ENCODE measurements at regions of chr7 and their contacts with region 1.

Region 1: GRCh38 chr7:36366718-36367560 is 22.7 kb upstream of the ANLN start:
- DNase-seq: peak; percentile 84 to 92 (median 91)
- ATAC-seq: peak; percentile 98
- H3K4me3 ChIP-seq: peak overlapping the region; percentile 76
- H3K4me3 Mint-ChIP-seq: peak overlapping the region; percentile 80 to 97 (median 93)
- H3K27ac ChIP-seq: peak overlapping the region; percentile 70
- H3K27ac Mint-ChIP-seq: peak overlapping the region in 8 of 9 donors; percentile 51 to 94 (median 82)
- H3K4me1 ChIP-seq: peaks cover 0 to 5% of the 10 kb centered on the region in 2 donors
- H3K4me1 Mint-ChIP-seq: peaks cover 0 to 8% (median 5%) of the 10 kb centered on the region in 7 donors
- H3K27me3 ChIP-seq: no peaks in the 10 kb centered on the region
- H3K27me3 Mint-ChIP-seq: peaks cover 0 to 57% (median 0%) of the 10 kb centered on the region in 5 donors

Region 2: DNA sequence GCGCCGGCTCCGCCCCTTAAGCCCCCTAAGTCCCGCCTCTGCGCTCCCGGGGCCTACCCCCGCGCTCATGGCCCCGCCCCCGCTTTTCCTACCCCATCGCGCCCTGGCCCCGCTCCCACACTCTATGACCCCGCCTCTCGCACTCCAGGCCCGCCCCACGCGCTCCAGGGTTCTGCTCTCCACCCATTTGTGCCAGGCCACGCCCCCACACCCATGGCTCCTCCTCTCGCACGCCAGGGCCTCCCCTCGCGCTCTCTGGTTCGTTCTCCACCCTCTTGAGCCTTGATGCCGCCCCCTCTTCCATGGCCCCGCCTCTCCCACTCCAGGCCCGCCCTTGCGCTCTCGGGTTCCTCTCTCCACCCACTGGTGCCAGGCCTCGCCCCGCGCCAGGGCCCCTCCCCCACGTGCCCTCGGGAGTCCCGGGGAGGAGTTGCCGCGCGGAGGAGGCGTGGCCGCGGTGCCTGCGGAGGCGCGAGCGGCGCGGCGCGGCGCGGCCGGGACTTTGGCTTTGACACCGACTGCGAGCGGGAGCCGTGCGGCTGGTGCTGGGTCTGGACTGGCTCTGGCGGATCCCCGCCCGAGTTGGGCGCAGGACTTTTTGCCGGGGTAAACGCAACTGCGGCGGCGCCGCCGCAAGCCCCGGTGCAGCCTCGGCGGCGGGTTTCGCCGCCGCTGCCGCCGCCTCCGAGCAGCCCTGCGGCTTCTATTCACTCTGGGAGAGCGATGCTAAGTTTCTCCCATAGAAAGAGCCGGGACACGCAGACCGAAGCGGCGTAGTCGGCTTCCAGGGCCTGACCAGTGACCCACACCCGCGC is 214.0 kb before region 1 on chr7 and contains the start of gene EEPD1:
- CTCF ChIA-PET with region 1: no interaction called
- POLR2A ChIA-PET with region 1: no interaction called
- intact Hi-C with region 1: loop called (anchors 1 to 10 kb)
- DNase-seq: peak; percentile 99 to 100 (median 100)
- ATAC-seq: peak; percentile 96
- H3K4me3 ChIP-seq: peak within 1 kb of the TSS; percentile 72
- H3K4me3 Mint-ChIP-seq: peak within 1 kb of the TSS; percentile 70 to 93 (median 84)
- H3K27ac ChIP-seq: peak within 1 kb of the TSS; percentile 73
- H3K27ac Mint-ChIP-seq: peak within 1 kb of the TSS in 8 of 9 donors; percentile 10 to 87 (median 74)
- H3K4me1 ChIP-seq: peaks cover 7 to 16% of the 10 kb centered on the region in 2 donors
- H3K4me1 Mint-ChIP-seq: peaks cover 12 to 31% (median 24%) of the 10 kb centered on the region in 7 donors
- H3K27me3 ChIP-seq: no peaks in the 10 kb centered on the region
- H3K27me3 Mint-ChIP-seq: peaks cover 0 to 21% (median 0%) of the 10 kb centered on the region in 5 donors
- total RNA-seq, gene EEPD1: 2.2 to 13.2 (median 3.7) TPM

Region 3: DNA sequence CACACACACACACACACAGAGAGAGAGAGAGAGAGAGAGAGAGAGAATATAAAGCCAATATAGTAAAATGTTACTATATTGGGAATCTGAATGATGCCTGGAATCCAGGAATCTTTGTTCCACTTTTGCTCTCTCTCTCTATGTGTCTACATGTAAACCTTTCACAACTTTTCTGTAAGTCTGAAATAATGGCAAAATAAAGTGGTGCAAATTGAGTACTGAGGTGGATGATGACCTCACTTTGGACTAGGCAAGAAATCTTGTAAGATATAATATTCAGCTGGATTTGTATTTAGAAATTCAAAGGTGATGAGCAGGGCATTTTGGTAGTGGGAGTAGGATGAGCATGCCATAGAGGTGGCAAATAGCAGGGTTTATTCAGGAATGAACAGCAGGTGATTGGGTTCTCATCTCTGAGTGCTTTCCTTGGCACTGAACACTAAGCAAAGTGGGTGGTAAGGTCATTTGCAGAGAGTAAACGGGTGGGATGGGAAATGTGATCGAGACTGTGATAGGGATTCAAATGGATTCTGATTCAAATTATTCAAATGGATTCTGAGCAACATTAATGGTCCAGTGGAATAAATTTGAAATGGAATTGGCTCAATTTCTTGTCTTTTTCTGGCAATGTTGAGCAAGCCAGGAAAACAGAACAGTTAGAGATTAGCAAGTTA is 13.0 kb after region 1 on chr7:
- CTCF ChIA-PET with region 1: interaction called, 3 read pairs
- POLR2A ChIA-PET with region 1: interaction called, 6 read pairs
- intact Hi-C with region 1: loop called in 1 of 2 experiments (anchors 1 kb)
- DNase-seq: no peak
- ATAC-seq: no peak
- H3K4me3 ChIP-seq: no peak overlapping the region
- H3K4me3 Mint-ChIP-seq: peak overlapping the region in 1 of 10 donors; percentile 5
- H3K27ac ChIP-seq: no peak overlapping the region
- H3K27ac Mint-ChIP-seq: peak overlapping the region in 5 of 9 donors; percentile 9 to 60 (median 32)
- H3K4me1 ChIP-seq: peaks cover 5 to 7% of the 10 kb centered on the region in 2 donors
- H3K4me1 Mint-ChIP-seq: peaks cover 7 to 30% (median 25%) of the 10 kb centered on the region in 7 donors
- H3K27me3 ChIP-seq: no peaks in the 10 kb centered on the region
- H3K27me3 Mint-ChIP-seq: peaks cover 2 to 22% (median 6%) of the 10 kb centered on the region in 5 donors

Region 4: DNA sequence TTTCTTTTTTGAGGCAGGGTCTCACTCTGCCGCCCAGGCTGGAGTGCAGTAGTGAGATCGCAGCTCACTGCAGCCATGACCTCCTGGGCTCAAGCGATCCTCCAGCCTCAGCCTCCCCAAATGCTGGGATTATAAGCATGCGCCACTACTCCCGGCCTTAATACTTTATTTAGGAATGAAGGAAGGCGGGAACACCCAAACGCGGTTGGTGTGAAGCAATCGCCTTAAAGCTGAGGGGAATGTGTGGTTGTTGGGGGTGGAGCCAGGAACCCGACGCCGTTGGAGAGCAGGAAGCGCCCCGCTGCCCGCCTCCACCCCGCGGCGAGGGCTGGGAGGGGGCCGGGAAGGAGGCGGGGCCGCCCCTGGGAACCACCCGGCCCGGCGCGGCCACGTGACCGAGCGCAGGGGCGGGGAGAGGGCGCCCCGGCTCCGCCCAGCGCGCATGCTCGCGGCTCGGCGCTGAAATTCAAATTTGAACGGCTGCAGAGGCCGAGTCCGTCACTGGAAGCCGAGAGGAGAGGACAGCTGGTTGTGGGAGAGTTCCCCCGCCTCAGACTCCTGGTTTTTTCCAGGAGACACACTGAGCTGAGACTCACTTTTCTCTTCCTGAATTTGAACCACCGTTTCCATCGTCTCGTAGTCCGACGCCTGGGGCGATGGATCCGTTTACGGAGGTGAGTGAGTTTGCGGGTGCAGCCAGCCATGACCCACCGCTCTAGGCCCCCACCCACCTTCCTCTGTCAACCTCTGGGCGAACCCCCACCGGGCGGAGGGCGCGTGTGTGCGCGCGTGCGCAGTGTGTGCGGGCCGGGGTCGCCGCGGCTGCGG is 22.6 kb after region 1 on chr7 and contains the start of gene ANLN:
- CTCF ChIA-PET with region 1: interaction called, 11 read pairs
- POLR2A ChIA-PET with region 1: no interaction called
- intact Hi-C with region 1: loop called (anchors 1 kb)
- DNase-seq: peak; percentile 71 to 91 (median 82)
- ATAC-seq: peak; percentile 98
- H3K4me3 ChIP-seq: peak within 1 kb of the TSS; percentile 78
- H3K4me3 Mint-ChIP-seq: peak within 1 kb of the TSS; percentile 77 to 90 (median 85)
- H3K27ac ChIP-seq: peak within 1 kb of the TSS; percentile 67
- H3K27ac Mint-ChIP-seq: peak within 1 kb of the TSS; percentile 72 to 90 (median 81)
- H3K4me1 ChIP-seq: peaks cover 8 to 19% of the 10 kb centered on the region in 2 donors
- H3K4me1 Mint-ChIP-seq: peaks cover 12 to 39% (median 26%) of the 10 kb centered on the region in 7 donors
- H3K27me3 ChIP-seq: no peaks in the 10 kb centered on the region
- H3K27me3 Mint-ChIP-seq: peaks cover 0 to 12% (median 0%) of the 10 kb centered on the region in 5 donors
- total RNA-seq, gene ANLN: 0.35 to 48.6 (median 0.82) TPM

Region 5: GRCh38 chr7:36440880-36441279 is 73.9 kb after region 1 on chr7:
- CTCF ChIA-PET with region 1: no interaction called
- POLR2A ChIA-PET with region 1: interaction called, 3 read pairs
- intact Hi-C with region 1: loop called in 1 of 2 experiments (anchors 5 kb)
- DNase-seq: peak in 4 of 9 donors; percentile 3 to 19 (median 10)
- ATAC-seq: no peak
- H3K4me3 ChIP-seq: no peak overlapping the region
- H3K4me3 Mint-ChIP-seq: no peak overlapping the region
- H3K27ac ChIP-seq: no peak overlapping the region
- H3K27ac Mint-ChIP-seq: no peak overlapping the region
- H3K4me1 ChIP-seq: no peaks in the 10 kb centered on the region
- H3K4me1 Mint-ChIP-seq: no peaks in the 10 kb centered on the region
- H3K27me3 ChIP-seq: no peaks in the 10 kb centered on the region
- H3K27me3 Mint-ChIP-seq: no peaks in the 10 kb centered on the region

Region 6: DNA sequence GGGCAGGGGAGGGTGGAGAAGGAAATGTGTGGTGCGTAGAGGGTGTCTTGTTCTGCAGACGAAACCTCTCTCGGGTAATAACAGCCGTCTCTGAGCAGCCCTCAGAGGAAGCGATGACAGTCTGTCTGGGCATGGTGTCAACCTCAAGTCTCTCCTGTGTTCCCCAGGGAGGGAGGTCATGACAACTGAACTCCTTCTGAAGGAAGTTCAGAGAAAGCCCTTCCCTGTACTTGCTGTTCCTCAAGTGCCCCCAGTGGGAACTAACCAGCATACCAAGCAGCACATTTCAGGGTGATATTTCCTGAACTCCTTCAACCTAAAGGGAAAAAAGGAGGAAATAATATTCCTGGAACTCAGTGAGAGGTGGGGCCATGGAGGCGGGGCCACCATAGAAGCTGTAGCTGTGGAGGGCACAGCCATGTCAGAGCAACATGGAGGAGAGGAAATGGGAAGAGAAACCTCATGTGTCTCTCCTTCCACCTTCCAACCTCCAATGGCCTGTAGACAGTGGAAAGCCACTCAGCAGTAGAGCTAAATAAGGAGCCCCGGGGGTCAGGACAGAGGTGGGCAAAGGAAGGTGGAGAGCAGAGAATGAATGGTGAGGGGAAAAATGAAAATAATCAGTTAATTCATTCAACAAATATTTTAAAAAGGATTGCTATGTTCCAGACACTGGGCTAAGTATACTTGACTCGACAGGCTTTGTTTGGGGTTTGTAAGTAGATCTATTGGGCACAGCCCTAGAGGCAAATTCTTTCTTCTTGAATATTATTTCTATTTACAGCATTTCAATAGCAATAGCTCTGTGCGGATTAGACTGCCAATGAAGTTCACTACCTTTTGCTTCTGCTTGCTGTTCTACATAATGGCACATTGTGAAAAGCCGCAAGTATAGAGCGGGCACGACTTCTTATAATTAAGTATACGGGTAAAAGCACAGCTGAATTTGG is 418.3 kb after region 1 on chr7:
- CTCF ChIA-PET with region 1: no interaction called
- POLR2A ChIA-PET with region 1: no interaction called
- intact Hi-C with region 1: loop called in 1 of 2 experiments (anchors 10 kb)
- DNase-seq: peak; percentile 23 to 87 (median 84)
- ATAC-seq: peak; percentile 89
- H3K4me3 ChIP-seq: no peak overlapping the region
- H3K4me3 Mint-ChIP-seq: peak overlapping the region; percentile 35 to 85 (median 69)
- H3K27ac ChIP-seq: peak overlapping the region; percentile 78
- H3K27ac Mint-ChIP-seq: peak overlapping the region; percentile 92 to 99 (median 97)
- H3K4me1 ChIP-seq: peaks cover 59 to 87% of the 10 kb centered on the region in 2 donors
- H3K4me1 Mint-ChIP-seq: peaks cover 61 to 95% (median 83%) of the 10 kb centered on the region in 7 donors
- H3K27me3 ChIP-seq: no peaks in the 10 kb centered on the region
- H3K27me3 Mint-ChIP-seq: no peaks in the 10 kb centered on the region